A673 (cell line): ENCODE measurements at regions of chr10 and their contacts with region 1.

Region 1: DNA sequence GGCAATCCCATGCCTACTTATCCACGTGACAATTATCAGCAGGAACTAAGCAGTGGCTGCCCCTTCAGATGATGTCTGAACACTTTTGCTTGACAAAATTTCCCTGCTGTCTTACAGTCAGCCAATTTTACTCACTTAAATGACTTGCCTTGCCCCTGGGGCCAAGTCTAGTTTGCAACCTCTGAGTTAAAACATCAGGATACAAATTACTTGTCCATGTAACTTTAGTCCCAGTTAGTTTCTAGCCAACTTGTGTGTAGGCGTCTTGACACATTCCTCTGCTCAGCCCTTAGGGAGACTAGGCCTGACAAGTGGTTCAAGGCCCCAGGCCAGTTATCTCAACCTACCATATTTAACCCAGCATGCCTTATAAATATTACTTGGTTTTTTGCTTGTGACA is 11.6 kb upstream of the TYSND1 start:
- DNase-seq: no peak
- H3K4me3 ChIP-seq: no peak overlapping the region
- H3K27ac ChIP-seq: no peak overlapping the region
- H3K4me1 ChIP-seq: peaks cover under 1% of the 10 kb centered on the region
- H3K27me3 ChIP-seq: no peaks in the 10 kb centered on the region
- CTCF ChIP-seq: no peak

Region 2: GRCh38 chr10:69392481-69393000 is 765.6 kb before region 1 on chr10:
- CTCF ChIA-PET with region 1: no interaction called
- POLR2A ChIA-PET with region 1: no interaction called
- intact Hi-C with region 1: no loop called
- DNase-seq: peak; percentile 91
- H3K4me3 ChIP-seq: no peak overlapping the region
- H3K27ac ChIP-seq: no peak overlapping the region
- H3K4me1 ChIP-seq: peaks cover 24% of the 10 kb centered on the region
- H3K27me3 ChIP-seq: no peaks in the 10 kb centered on the region
- CTCF ChIP-seq: peak; percentile 92

Region 3: DNA sequence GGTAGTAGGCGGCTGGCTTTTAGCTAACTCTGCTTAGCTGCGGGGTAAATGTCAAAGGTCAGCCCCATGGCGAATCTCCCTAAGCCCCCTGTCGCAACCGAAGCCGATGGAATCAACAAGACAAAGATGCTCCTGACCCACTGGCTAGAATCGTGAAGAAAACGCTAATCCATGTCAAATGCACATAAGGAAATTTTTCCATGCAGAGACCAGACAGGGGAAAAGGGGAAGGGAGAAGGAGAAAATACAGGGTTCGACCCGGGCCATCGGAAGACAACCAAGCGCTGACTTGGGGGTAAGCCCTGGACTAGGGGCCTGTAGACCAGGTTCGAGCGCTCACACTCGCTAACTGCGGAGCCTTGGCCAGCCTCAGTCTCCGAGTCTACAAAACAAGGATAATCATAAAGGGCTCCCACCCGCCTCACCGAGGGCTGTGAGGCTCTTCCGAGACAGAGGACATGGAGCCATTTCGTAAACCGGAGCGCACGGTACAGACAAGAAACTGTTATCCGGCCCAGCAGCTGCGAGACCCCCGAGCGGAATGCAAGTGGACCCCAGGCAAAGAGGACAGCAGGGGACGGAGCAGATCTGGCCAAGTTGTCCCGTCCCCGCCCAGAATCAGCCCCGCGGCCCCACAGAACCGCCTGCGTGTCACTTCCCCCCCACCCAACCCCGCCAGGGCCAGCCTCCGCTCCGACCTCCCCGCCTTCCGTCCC is 11.7 kb after region 1 on chr10:
- CTCF ChIA-PET with region 1: interaction called, 11 read pairs
- POLR2A ChIA-PET with region 1: no interaction called
- intact Hi-C with region 1: no loop called
- DNase-seq: peak; percentile 20
- H3K4me3 ChIP-seq: peak overlapping the region; percentile 94
- H3K27ac ChIP-seq: peak overlapping the region; percentile 93
- H3K4me1 ChIP-seq: peaks cover 13% of the 10 kb centered on the region
- H3K27me3 ChIP-seq: no peaks in the 10 kb centered on the region
- CTCF ChIP-seq: no peak